ENCODE measurements at regions of chr15 and their contacts with region 1.

Region 1: DNA sequence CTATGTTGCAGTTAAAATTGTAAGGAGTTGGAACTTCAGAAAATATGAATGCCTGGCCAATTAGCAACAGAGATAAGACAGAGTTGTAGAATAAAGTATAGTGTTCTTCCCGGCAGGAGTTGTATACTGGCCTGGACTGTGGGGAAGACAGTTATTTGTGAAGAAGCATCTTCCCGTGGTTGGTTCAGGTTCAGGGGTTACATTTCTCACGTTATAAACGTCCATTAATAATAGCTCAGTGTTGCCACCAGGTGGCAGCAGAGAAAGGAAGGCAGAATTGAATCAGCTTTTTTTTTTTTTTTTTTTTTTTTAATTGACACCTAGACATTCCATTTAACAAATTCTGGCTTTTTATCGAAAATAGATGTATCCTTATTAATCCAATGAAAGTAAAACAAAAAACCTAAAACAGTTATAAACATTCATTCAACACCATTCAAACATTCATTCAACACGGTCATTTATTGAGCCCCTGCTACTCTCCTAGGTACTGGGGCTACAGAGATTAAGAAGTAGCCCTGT is 66.4 kb upstream of the NR2E3 start:
- DNase-seq: peak; percentile 64
- ATAC-seq: no peak
- H3K4me3 ChIP-seq: no peak overlapping the region
- H3K27ac ChIP-seq: peak overlapping the region; percentile 1; the same call in 1 of the 2 replicates
- H3K4me1 ChIP-seq: peaks cover 50% of the 10 kb centered on the region
- H3K27me3 ChIP-seq: no peaks in the 10 kb centered on the region
- CTCF ChIP-seq: peak; percentile 78

Region 2: DNA sequence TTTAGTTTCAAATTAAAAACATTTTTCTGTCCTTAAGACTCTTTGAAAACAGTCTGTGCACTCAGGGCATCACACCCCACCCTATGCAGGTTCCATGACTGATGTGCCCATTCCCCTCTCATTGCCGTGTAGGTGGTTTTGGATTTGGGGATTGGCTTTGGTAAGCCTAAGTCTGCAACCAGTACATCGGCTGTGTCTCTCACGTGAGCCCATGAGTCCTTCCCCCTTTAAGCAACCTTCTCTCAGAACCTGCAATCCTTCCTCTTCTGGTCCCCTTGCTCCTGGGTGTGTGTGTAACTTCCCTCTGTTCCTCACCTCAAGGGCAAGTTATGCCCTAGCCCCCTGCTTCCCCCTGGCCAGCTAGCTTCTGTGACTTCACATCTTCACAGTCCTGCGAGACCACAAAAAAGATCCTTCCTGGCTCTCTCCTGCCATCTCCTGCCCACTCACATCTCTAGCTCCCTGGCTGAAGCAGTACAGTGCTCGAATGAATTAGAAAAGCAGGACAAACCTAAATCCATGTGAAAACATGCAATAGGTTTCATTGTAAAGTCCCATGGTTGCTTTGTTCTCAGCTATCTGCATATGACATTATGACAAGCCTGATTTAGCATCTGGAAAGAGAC is 1107.3 kb before region 1 on chr15:
- CTCF ChIA-PET with region 1: interaction called, 16 read pairs
- POLR2A ChIA-PET with region 1: no interaction called
- intact Hi-C with region 1: no loop called
- DNase-seq: peak; percentile 52
- ATAC-seq: peak; percentile 31; the same call in 1 of the 2 replicates
- H3K4me3 ChIP-seq: no peak overlapping the region
- H3K27ac ChIP-seq: no peak overlapping the region
- H3K4me1 ChIP-seq: peaks cover 24% of the 10 kb centered on the region
- H3K27me3 ChIP-seq: no peaks in the 10 kb centered on the region
- CTCF ChIP-seq: peak; percentile 72

Region 3: GRCh38 chr15:71448688-71449114 is 295.2 kb before region 1 on chr15:
- CTCF ChIA-PET with region 1: interaction called, 3 read pairs
- POLR2A ChIA-PET with region 1: no interaction called
- intact Hi-C with region 1: loop called (anchors 1 kb)
- DNase-seq: peak; percentile 90
- ATAC-seq: no peak
- H3K4me3 ChIP-seq: peak overlapping the region; percentile 52; the same call in 1 of the 2 replicates
- H3K27ac ChIP-seq: peak overlapping the region; percentile 99
- H3K4me1 ChIP-seq: peaks cover 52% of the 10 kb centered on the region
- H3K27me3 ChIP-seq: no peaks in the 10 kb centered on the region
- CTCF ChIP-seq: peak; percentile 87

Region 4: DNA sequence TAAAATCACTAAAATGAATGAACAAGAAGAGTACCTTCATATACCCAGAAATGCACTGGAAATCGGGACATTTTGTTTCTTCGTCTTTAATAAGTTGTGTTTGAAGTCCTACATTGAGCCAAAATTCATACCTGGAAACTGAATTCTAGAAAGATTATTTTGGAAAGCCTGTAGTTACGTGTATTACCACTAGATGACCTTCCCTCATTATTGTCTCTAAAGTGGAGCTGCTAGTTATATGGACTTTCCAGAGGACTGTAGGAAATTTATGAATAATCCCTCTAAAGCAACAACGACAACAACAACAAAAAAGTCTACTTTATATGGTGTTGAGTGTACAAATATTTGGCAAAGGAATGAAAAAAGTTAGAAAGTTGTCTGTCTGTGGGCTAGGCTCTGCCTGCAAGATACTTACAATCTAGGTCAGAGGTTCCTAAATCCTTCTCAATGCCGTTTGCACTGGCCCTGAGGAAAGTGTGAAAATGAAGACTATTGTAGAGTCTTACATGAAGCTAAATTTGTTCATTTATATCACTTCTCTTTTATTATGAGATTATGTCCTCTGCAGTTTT is 168.4 kb before region 1 on chr15:
- CTCF ChIA-PET with region 1: interaction called, 11 read pairs
- POLR2A ChIA-PET with region 1: no interaction called
- intact Hi-C with region 1: no loop called
- DNase-seq: peak; percentile 49
- ATAC-seq: no peak
- H3K4me3 ChIP-seq: no peak overlapping the region
- H3K27ac ChIP-seq: no peak overlapping the region
- H3K4me1 ChIP-seq: peaks cover 27% of the 10 kb centered on the region
- H3K27me3 ChIP-seq: no peaks in the 10 kb centered on the region
- CTCF ChIP-seq: peak; percentile 79

Region 5: DNA sequence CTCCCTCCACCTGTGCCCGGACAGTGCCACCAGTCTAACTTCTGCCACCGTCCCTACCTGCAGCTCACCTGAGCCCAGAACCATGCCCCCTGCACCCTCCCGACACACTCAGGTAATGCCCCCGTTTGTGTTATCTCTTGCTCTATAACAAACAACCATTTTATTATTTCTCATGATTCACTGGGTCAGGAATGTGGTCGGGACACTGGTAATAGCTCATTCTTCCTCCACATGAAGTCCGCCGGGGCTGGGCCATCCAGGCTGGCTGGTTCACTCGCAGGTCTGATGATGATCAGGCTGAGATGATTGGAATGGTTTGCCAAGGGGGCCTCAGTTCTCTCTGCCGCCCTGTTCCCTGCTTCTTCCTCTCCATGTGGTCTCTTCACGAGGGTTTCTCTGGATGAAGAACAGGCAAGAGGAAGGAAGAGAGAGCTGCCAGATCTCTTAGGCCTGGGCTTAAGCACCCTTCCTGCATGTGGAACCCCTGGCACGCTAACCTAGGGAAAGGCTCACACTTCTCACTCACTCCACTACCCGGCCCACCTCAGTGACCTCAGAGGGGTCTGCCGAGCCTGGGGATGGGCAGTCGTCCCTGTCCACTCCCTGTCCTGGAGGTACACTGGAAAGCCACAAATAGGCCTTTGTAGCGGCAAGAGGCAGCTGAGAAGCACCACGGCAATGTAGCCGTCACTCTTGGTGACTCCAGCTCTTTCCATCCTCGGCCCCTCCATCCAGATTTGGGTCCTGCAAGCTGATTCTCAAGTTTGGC is 46.3 kb after region 1 on chr15:
- CTCF ChIA-PET with region 1: no interaction called
- POLR2A ChIA-PET with region 1: no interaction called
- intact Hi-C with region 1: loop called (anchors 2 kb)
- DNase-seq: peak; percentile 88
- ATAC-seq: peak; percentile 67
- H3K4me3 ChIP-seq: peak overlapping the region; percentile 12; the same call in 1 of the 2 replicates
- H3K27ac ChIP-seq: peak overlapping the region; percentile 96
- H3K4me1 ChIP-seq: peaks cover 41% of the 10 kb centered on the region
- H3K27me3 ChIP-seq: no peaks in the 10 kb centered on the region
- CTCF ChIP-seq: no peak

Region 6: DNA sequence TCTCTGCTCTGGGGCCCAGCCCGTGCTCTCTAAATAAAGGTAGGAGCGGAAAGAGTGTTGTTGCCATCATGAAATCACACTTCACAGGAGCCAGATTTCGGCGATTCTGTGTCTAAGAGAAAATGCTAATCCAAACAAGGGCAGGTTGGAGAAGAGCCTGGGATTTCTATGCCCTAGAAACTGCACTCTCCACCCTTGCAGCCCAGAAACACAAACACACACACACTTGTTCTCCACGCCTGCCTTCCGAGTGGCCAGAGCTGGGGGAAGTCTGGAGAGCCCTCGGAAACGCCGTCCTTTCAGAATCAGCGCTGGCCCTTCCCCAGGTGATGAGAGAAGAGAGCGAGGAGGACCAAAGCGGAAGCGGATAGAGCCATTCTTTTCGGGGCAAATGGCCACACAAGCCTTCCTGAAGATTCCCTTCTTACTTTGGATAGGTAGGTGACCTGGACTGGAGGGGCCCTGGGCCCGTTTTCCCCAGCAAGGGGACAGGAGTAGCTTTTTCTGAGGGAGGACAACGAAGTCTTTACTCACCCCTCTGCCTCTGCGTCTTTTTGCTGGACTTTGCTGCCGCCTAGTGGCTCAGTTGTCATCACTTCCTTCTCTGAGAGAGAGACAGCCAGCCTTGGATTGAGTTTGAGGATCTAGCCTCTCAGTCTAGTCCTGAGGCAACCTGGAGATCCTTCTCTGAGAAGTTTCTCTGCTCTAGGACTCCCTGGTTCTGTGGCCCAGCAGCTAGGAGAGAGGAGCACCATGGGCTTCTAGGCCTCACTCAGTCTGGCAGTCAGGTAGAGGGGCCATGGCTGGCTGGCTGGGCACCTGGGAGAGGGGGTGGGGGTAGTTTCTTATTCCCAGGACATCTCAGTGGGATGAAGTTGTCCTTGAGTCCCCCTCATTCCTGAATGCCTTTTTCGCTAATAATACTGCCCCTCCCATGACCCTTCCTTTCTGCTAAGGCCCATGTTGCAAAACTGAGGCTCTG is 412.0 kb after region 1 on chr15:
- CTCF ChIA-PET with region 1: interaction called, 3 read pairs
- POLR2A ChIA-PET with region 1: no interaction called
- intact Hi-C with region 1: loop called (anchors 2 kb)
- DNase-seq: peak; percentile 92
- ATAC-seq: peak; percentile 94
- H3K4me3 ChIP-seq: peak overlapping the region; percentile 73
- H3K27ac ChIP-seq: no peak overlapping the region
- H3K4me1 ChIP-seq: peaks cover 12% of the 10 kb centered on the region
- H3K27me3 ChIP-seq: no peaks in the 10 kb centered on the region
- CTCF ChIP-seq: peak; percentile 93

Measured in PC-3 (cell line).